ENCODE measurements at regions of chr11 and their contacts with region 1.

Region 1: DNA sequence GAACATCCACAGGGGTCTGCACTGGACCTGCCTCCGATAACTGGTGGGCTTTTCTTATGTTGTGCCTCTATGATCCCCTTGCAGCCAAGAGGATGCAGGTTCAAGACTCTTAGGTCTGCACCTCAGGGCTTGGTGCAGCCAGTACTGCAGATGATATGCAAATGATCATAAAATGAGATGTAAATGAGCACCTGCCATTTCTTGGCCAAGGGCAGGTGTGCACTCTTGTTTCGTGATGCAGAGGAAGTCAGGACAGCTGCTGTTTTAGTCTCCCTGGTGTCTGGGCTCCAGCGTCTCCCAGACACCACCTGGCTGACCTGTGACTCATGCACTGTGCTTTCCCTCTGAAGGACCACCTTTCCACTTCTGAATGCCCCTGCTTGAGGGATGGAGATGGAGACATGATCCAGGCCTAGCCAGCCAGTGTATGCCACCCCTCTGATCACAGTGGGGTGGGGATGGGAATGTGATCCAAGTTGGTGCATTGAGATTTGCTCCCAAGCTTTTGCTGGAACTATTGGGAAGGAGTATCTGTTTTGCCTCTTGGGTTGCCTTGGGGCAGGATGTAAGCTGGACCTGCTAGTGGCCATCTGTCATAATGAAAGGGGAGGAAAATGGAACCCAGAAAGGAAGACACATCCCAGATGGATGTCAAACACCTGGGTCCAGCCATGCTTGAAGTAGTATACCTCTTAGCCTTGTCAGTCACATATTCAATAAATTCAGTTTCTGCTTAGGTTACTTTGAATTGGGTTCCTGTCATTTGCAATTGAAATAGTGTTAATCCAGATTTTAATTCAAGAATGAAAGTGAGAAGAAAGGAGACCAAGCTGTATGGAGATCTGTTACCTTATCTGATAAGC is 3.3 kb upstream of the KCNJ11 start:
- DNase-seq: no peak
- ATAC-seq: no peak

Region 2: GRCh38 chr11:17504330-17505107 is 112.8 kb after region 1 on chr11:
- intact Hi-C with region 1: loop called (anchors 5 kb)
- DNase-seq: peak; percentile 86
- ATAC-seq: peak; percentile 68

Measured in sciatic nerve (tissue), 2 donors.